ENCODE measurements at regions of chr13 and their contacts with region 1.

Region 1: GRCh38 chr13:102724923-102725322 is 30.1 kb upstream of the METTL21C start:
- DNase-seq: peak in 2 of 4 experiments; percentile 27 to 34
- ATAC-seq: peak; percentile 94
- H3K4me3 ChIP-seq: no peak overlapping the region
- H3K27ac ChIP-seq: no peak overlapping the region
- H3K4me1 ChIP-seq: no peaks in the 10 kb centered on the region
- H3K27me3 ChIP-seq: no peaks in the 10 kb centered on the region
- CTCF ChIP-seq: peak; percentile 37 to 65 (median 52); a peak in 5 of 6 replicates
- EP300 ChIP-seq: no peak
- POLR2A ChIP-seq: no peak
- RAD21 ChIP-seq: peak; percentile 64 to 77

Region 2: DNA sequence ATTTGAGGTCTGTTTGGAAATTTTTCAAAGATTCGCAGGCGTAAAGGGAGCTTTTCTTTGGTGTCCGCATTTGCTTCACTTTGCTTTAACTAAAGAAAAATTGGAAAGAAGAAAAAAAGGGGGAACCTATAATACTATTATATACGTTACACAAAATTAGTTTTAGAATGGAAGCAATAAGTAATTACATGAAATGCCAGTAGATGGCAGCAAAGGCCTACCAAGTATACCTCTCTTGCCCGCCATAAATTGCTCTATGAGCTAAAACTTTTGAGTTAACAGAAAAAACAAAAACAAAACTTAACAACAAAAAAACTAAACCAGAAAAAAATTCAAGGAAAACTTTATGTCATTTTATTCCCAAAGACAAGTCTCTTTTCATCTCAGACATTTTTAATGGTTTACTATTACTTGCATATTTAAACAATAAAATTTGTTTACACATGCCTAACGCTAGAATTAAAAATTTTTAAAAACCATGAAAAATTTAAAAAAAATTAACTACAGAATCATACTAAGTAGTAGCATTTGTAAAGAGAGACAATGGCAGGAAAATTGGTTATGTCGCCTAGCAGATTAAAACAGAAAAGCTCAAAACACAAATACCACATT is 1580.0 kb before region 1 on chr13:
- CTCF ChIA-PET with region 1: no interaction called
- POLR2A ChIA-PET with region 1: no interaction called
- in situ Hi-C with region 1: no loop called
- intact Hi-C with region 1: loop called (anchors 5 kb)
- DNase-seq: peak; percentile 12 to 47 (median 22)
- ATAC-seq: peak; percentile 68
- H3K4me3 ChIP-seq: no peak overlapping the region
- H3K27ac ChIP-seq: no peak overlapping the region
- H3K4me1 ChIP-seq: no peaks in the 10 kb centered on the region
- H3K27me3 ChIP-seq: no peaks in the 10 kb centered on the region
- CTCF ChIP-seq: peak; percentile 24 to 64 (median 33); a peak in 3 of 6 replicates
- EP300 ChIP-seq: no peak
- POLR2A ChIP-seq: no peak
- RAD21 ChIP-seq: peak; percentile 59 to 70

Region 3: GRCh38 chr13:102580552-102581169 is 144.3 kb before region 1 on chr13:
- CTCF ChIA-PET with region 1: interaction called, 10 read pairs
- POLR2A ChIA-PET with region 1: no interaction called
- in situ Hi-C with region 1: no loop called
- intact Hi-C with region 1: loop called (anchors 1 kb)
- DNase-seq: peak; percentile 27 to 69 (median 42)
- ATAC-seq: peak; percentile 84
- H3K4me3 ChIP-seq: no peak overlapping the region
- H3K27ac ChIP-seq: no peak overlapping the region
- H3K4me1 ChIP-seq: peaks cover 0 to 9% of the 10 kb centered on the region in 2 experiments; a peak in 3 of 5 replicates
- H3K27me3 ChIP-seq: no peaks in the 10 kb centered on the region
- CTCF ChIP-seq: peak; percentile 50 to 69 (median 59); a peak in 5 of 6 replicates
- EP300 ChIP-seq: no peak
- POLR2A ChIP-seq: no peak
- RAD21 ChIP-seq: peak; percentile 66 to 87

Region 4: DNA sequence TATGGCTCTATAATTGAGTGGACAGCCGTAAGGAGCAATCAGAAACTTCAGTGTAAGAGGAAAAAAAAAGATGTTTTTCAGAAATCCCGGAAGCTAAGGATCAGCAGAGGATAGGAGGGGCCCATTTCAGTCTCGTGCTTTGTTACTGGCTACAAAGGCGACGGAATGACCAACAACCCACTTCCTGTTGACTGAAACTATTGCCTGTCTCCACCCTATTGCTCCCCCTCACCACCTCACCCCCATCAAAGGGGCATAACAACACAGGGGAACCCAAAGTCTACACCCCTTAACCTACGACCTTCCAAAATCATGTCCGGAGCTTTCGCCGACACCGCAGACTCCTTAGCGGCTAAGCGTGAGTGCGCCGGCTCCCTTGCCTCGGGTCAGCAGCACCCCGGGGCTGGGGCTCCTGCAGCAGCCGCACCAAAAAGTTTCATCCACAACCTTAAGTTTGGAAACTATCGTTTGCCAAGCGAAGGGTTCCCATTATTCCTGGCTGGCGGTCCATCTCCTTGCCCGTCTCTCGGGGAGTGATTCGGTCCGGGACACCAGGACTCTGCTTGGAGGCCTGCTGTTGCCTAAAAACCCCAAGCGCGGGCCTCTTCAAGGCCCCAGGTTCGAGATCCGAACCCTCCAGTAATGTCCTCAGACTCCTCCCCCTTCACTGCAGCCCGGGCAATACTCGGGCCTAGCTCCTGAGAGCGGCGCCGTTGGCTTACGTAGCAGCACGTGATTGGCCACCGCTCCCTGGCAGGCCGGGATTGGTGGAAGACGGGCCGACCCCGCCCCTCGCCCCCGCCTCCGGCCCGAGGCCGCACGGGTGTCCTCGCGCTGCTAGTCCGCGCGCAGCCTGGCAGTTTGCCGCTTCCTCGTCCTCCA is 128.5 kb before region 1 on chr13 and contains the start of gene TPP2:
- CTCF ChIA-PET with region 1: no interaction called
- POLR2A ChIA-PET with region 1: no interaction called
- in situ Hi-C with region 1: no loop called
- intact Hi-C with region 1: loop called (anchors 1 kb)
- DNase-seq: peak; percentile 96 to 99 (median 99)
- ATAC-seq: peak; percentile 86
- H3K4me3 ChIP-seq: peak within 1 kb of the TSS; percentile 89
- H3K27ac ChIP-seq: peak within 1 kb of the TSS; percentile 96
- H3K4me1 ChIP-seq: peaks cover 11 to 17% of the 10 kb centered on the region in 2 experiments
- H3K27me3 ChIP-seq: no peaks in the 10 kb centered on the region
- CTCF ChIP-seq: no peak
- EP300 ChIP-seq: 0 out of 2 replicates have a peak, but pooled peaks have one; percentile 4
- POLR2A ChIP-seq: peak; percentile 86
- RAD21 ChIP-seq: no peak
- polyA plus RNA-seq, gene TPP2: 18.8 to 25.8 TPM

Region 5: DNA sequence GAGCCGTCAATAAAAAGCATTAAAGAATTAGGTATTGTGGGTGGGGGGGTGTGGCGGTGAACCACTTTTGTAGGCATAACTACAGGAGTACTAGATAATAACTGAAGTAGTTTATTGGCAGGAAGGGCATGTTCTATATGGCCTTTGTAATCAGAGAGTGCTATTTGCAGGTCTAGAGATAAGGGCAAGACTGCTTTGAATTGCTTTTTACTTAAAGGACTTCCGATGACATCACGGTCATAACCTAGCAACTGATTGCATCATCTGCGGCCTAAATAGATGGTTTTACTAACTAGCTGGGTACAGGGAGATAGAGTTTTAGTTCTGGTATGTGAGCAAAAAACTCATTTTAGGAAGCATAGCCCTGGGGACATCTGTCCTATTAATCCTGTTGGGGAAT is 54.8 kb before region 1 on chr13:
- CTCF ChIA-PET with region 1: no interaction called
- POLR2A ChIA-PET with region 1: no interaction called
- in situ Hi-C with region 1: no loop called
- intact Hi-C with region 1: no loop called
- DNase-seq: peak in 1 of 4 experiments; percentile 38
- ATAC-seq: peak; percentile 91
- H3K4me3 ChIP-seq: no peak overlapping the region
- H3K27ac ChIP-seq: no peak overlapping the region; the same call in 2 of the 3 replicates
- H3K4me1 ChIP-seq: peaks cover 0 to 6% of the 10 kb centered on the region in 2 experiments; a peak in 3 of 5 replicates
- H3K27me3 ChIP-seq: no peaks in the 10 kb centered on the region
- CTCF ChIP-seq: no peak
- EP300 ChIP-seq: peak; percentile 56
- POLR2A ChIP-seq: no peak
- RAD21 ChIP-seq: no peak

Region 6: GRCh38 chr13:102773441-102774215 is 48.7 kb after region 1 on chr13 and contains the start of gene TEX30:
- CTCF ChIA-PET with region 1: no interaction called
- POLR2A ChIA-PET with region 1: no interaction called
- in situ Hi-C with region 1: no loop called
- intact Hi-C with region 1: loop called (anchors 2 kb)
- DNase-seq: peak; percentile 83 to 85 (median 84)
- ATAC-seq: peak; percentile 95
- H3K4me3 ChIP-seq: peak within 1 kb of the TSS; percentile 86
- H3K27ac ChIP-seq: peak within 1 kb of the TSS; percentile 88
- H3K4me1 ChIP-seq: peaks cover 13 to 26% of the 10 kb centered on the region in 2 experiments; a peak in 4 of 5 replicates
- H3K27me3 ChIP-seq: no peaks in the 10 kb centered on the region
- CTCF ChIP-seq: no peak
- EP300 ChIP-seq: no peak
- POLR2A ChIP-seq: peak; percentile 84
- RAD21 ChIP-seq: no peak
- polyA plus RNA-seq, gene TEX30: 109 to 143 TPM

Region 7: DNA sequence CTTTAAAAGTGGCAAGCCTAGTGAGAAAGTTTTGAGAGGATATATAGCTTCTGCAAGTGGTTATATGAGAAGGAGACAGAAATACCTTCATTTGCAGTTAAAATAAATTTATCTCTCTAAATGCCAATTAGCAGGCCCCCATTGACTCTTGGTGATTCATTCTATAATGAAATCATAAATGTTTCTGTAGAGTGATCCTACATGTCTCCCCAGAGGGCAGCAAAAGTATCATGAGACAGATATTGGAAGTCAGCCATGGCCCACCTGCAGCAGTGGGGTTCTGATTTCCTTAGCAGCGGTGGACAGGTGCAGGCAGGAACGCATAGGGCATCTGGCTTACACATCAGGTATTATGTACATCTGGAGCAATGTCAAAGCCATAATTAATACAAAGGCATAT is 726.7 kb after region 1 on chr13:
- CTCF ChIA-PET with region 1: no interaction called
- POLR2A ChIA-PET with region 1: no interaction called
- in situ Hi-C with region 1: no loop called
- intact Hi-C with region 1: no loop called
- DNase-seq: no peak
- ATAC-seq: no peak
- H3K4me3 ChIP-seq: no peak overlapping the region
- H3K27ac ChIP-seq: no peak overlapping the region
- H3K4me1 ChIP-seq: no peaks in the 10 kb centered on the region
- H3K27me3 ChIP-seq: no peaks in the 10 kb centered on the region
- CTCF ChIP-seq: no peak
- EP300 ChIP-seq: no peak
- POLR2A ChIP-seq: no peak
- RAD21 ChIP-seq: no peak

Measured in K562 (cell line).